Adrenal gland (tissue), 19 donors: ENCODE measurements at regions of chr3 and their contacts with region 1.

Region 1: GRCh38 chr3:40179016-40179415 is 130.5 kb upstream of the EIF1B start:
- DNase-seq: peak; percentile 64 to 92 (median 75)
- H3K4me3 ChIP-seq: no peak overlapping the region
- H3K27ac ChIP-seq: no peak overlapping the region
- H3K4me1 ChIP-seq: no peaks in the 10 kb centered on the region
- H3K27me3 ChIP-seq: no peaks in the 10 kb centered on the region
- CTCF ChIP-seq: peak; percentile 51 to 77 (median 66)
- POLR2A ChIP-seq: no peak

Region 2: GRCh38 chr3:39541917-39542329 is 637.1 kb before region 1 on chr3:
- intact Hi-C with region 1: loop called in 1 of 2 experiments (anchors 5 kb)
- DNase-seq: peak in 3 of 7 donors; percentile 9 to 15 (median 12)
- H3K4me3 ChIP-seq: peak overlapping the region in 1 of 4 donors; percentile 41
- H3K27ac ChIP-seq: no peak overlapping the region
- H3K4me1 ChIP-seq: no peaks in the 10 kb centered on the region
- H3K27me3 ChIP-seq: no peaks in the 10 kb centered on the region
- CTCF ChIP-seq: peak; percentile 21 to 61 (median 44)
- POLR2A ChIP-seq: no peak

Region 3: DNA sequence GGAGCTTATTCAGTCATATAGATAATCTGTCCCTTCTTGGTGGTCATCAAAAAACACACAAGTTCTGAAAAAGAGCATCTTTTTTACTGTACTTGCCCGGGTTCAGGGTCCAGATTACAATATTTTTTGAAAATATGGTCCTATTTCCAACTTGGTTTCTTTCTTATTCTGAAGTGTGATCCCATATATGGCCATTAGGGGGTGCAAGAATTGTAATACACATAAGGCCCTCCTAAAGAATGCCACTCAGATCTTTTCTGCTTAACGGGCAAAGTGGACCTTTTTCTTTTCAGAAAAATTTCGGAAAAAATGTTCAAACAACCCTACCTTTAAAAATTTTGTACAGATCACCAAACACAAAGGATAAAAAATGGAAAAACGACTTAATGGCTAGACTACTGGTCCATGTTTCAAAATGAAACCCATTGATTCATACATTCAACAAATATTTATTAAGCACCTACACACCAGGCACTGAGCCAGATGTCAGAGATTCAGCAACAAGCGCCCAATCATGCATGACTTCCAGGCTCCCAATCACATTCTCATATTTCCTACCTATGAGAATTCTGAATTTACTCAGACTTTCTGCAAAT is 471.6 kb before region 1 on chr3:
- intact Hi-C with region 1: loop called (anchors 5 to 10 kb)
- DNase-seq: peak in 2 of 7 donors; percentile 10 to 17
- H3K4me3 ChIP-seq: no peak overlapping the region
- H3K27ac ChIP-seq: no peak overlapping the region
- H3K4me1 ChIP-seq: no peaks in the 10 kb centered on the region
- H3K27me3 ChIP-seq: no peaks in the 10 kb centered on the region
- CTCF ChIP-seq: peak; percentile 51 to 73 (median 56)
- POLR2A ChIP-seq: no peak

Region 4: DNA sequence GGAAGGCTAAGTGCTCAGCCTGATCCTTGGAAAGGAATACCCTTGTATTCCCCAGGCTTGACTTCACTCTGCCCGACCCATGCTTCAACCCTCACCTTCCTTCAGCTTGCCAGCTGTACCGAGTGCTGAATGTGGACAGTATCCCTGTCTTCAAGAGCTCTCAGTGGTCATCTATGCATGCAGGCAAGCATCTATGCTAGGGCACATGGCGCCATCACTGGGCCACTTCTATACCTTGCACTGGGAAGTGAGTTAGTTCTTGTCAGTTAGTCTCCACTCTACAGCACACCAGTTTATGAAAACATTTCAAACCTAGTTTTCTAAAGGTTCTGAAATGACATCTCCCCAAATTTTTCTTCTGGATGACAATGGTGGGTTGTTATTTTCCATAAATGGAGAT is 451.6 kb before region 1 on chr3:
- intact Hi-C with region 1: loop called in 1 of 2 experiments (anchors 5 kb)
- DNase-seq: no peak
- H3K4me3 ChIP-seq: no peak overlapping the region
- H3K27ac ChIP-seq: no peak overlapping the region
- H3K4me1 ChIP-seq: no peaks in the 10 kb centered on the region
- H3K27me3 ChIP-seq: no peaks in the 10 kb centered on the region
- CTCF ChIP-seq: no peak
- POLR2A ChIP-seq: no peak

Region 5: DNA sequence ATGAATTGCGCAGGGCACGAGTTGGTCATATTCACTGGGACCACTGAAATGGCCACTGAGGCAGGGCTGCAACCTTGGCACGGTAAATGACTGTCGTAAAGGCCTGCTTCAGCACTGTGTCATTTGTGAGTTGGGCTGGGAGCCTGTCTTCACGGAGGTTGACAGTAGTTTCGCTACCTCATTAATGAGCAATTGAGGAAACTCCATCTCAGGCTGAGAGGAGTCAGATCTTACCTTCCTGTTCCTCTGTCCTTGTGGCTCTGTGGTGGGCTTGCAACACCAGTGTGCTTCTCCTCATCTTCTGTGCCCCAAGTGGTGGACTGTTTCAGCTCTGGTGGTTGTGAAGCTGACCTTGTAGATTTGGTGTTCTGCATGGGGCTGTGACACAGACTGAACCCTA is 50.4 kb after region 1 on chr3:
- intact Hi-C with region 1: no loop called
- DNase-seq: peak in 1 of 7 donors; percentile 7
- H3K4me3 ChIP-seq: no peak overlapping the region
- H3K27ac ChIP-seq: no peak overlapping the region
- H3K4me1 ChIP-seq: no peaks in the 10 kb centered on the region
- H3K27me3 ChIP-seq: no peaks in the 10 kb centered on the region
- CTCF ChIP-seq: no peak
- POLR2A ChIP-seq: no peak

Region 6: DNA sequence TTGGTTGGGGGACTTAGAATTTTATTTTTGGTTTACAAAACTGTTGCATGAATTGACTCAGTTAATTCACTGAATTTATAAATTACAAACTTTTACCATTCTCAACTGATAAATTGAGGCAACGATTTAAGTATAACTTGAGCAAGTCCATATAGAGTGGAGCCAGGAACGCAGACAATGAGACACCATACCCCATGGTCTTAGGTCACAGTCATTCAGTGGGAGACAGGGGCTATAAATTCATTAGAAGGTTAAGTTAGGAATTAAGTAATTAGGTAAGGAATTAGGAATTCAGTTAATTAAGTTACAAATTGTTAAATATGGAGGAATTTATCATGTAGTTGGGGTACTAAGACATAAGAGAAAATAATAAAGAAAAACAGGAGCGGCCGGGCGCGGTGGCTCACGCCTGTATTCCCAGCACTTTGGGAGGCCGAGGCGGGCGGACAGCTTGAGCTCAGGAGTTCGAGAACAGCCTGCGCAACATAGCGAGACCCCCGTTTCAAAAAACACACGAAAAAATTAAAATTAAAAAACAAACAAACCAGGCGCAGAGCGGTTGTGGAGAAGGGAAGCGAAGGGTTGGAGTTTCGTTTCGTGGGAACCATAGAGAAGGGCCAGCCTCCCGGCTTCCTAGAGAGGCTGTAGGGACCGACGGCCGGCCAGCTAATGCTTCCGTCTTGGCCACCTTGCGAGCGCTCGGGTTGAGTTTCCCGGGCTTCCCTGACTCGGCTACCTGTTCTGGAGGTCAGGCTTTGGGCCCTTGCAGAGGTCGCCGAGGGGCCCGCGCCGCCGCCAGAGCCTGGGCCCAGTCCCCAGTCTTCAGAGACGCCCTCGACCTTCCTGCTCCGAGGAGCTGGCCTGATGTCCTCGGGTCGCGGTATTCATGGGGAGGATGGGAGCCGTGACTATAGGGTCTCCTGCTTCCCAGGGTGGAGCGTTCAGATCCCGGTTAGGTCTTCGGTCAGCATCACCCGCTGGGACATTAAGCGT is 297.8 kb after region 1 on chr3 and contains the start of gene ZNF619:
- intact Hi-C with region 1: no loop called
- DNase-seq: peak; percentile 62 to 83 (median 74)
- H3K4me3 ChIP-seq: peak within 1 kb of the TSS; percentile 50 to 69 (median 69)
- H3K27ac ChIP-seq: peak within 1 kb of the TSS in 3 of 5 donors; percentile 35 to 56 (median 45)
- H3K4me1 ChIP-seq: peaks cover 4 to 6% of the 10 kb centered on the region in 2 donors
- H3K27me3 ChIP-seq: no peaks in the 10 kb centered on the region
- CTCF ChIP-seq: no peak
- POLR2A ChIP-seq: peak in 1 of 2 donors; percentile 22
- total RNA-seq, gene ZNF619: 0.79 to 11.0 (median 6.0) TPM